ENCODE measurements at regions of chr17 and their contacts with region 1.

Region 1: DNA sequence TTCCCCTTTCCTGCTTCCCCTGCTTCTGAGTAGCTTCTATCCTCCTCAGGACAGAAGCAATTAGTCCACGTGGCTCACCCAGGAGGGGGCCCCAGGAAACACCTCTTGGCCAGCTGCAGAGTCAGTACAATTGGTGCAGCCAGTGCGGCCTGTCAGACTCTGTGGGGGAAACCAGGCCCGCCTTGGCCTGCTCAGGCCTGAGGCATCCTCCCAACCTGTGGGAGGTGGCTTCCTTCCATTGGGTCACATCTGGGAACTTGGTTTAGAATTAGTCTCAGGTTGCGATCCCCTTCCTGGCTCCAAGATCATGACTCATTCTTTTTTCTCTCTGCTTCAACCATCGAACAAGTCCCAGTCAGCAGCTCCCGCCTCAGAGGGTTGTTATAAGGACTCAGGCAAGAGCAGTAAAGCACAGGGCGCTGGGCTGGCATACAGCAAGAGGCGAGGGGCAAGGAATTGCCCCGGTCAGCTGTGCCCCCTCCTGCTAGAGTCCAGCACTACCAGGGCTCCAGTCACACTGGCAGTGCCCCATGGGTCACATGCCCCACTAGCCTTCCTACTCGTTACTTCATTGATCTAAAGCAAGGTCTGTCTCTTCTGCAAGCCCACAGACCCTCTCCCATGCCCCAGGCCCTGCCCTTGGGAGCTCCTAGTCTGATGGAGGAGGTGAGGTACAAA is 8.1 kb upstream of the EPX start:
- DNase-seq: no peak
- ATAC-seq: peak; percentile 8 to 39; a peak in 3 of 6 replicates
- H3K4me3 ChIP-seq: no peak overlapping the region
- H3K27ac ChIP-seq: no peak overlapping the region
- H3K4me1 ChIP-seq: peaks cover 1% of the 10 kb centered on the region; the same call in 2 of the 3 replicates
- CTCF ChIP-seq: no peak
- EP300 ChIP-seq: no peak
- POLR2A ChIP-seq: no peak
- RAD21 ChIP-seq: no peak

Region 2: DNA sequence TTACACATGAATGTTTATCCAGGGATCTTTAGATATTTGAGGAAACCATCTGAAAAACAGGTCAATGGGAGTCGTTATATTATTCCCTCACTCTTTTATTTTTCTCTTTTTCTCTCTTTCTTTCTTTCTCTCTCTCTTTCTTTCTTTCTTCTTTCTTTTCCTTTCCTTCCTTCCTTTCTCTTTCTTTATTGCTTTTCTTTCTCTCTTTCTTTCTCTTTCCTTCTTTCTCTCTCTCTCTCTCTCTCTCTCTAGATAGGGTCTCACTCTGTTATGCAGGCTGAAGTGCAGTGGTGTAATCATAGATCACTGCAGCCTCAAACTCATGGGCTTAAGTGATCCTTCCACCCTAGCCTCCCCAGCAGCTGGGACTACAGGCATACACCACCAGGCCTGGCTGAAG is 56.6 kb before region 1 on chr17:
- CTCF ChIA-PET with region 1: no interaction called
- POLR2A ChIA-PET with region 1: no interaction called
- DNase-seq: no peak
- ATAC-seq: no peak
- H3K4me3 ChIP-seq: no peak overlapping the region
- H3K27ac ChIP-seq: no peak overlapping the region
- H3K4me1 ChIP-seq: no peaks in the 10 kb centered on the region
- CTCF ChIP-seq: no peak
- EP300 ChIP-seq: no peak
- POLR2A ChIP-seq: no peak
- RAD21 ChIP-seq: no peak

Region 3: DNA sequence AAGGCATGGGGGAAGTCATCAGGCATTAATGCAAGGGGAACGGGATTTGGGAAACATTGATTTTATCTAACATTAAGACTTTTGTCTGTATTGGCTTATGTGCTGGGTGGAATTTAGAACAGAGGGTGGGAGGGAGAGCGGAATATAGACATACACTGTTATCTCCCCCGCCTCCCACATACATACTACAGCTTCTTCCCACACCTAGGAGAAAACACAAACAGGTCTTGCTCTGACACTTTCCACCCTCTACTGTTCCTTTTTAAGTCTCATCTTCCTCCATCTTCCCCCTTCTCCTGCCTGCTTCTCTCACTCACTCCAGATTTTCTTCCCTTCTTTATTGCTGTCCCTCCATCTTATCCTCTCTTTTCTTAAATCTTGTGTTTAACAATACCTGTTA is 35.8 kb before region 1 on chr17:
- CTCF ChIA-PET with region 1: no interaction called
- POLR2A ChIA-PET with region 1: no interaction called
- DNase-seq: no peak
- ATAC-seq: 0 out of 6 replicates have a peak, but pooled peaks of 1 of the 2 experiments have one; percentile 42
- H3K4me3 ChIP-seq: no peak overlapping the region
- H3K27ac ChIP-seq: no peak overlapping the region
- H3K4me1 ChIP-seq: no peaks in the 10 kb centered on the region
- CTCF ChIP-seq: no peak
- EP300 ChIP-seq: no peak
- POLR2A ChIP-seq: no peak
- RAD21 ChIP-seq: no peak

Region 4: DNA sequence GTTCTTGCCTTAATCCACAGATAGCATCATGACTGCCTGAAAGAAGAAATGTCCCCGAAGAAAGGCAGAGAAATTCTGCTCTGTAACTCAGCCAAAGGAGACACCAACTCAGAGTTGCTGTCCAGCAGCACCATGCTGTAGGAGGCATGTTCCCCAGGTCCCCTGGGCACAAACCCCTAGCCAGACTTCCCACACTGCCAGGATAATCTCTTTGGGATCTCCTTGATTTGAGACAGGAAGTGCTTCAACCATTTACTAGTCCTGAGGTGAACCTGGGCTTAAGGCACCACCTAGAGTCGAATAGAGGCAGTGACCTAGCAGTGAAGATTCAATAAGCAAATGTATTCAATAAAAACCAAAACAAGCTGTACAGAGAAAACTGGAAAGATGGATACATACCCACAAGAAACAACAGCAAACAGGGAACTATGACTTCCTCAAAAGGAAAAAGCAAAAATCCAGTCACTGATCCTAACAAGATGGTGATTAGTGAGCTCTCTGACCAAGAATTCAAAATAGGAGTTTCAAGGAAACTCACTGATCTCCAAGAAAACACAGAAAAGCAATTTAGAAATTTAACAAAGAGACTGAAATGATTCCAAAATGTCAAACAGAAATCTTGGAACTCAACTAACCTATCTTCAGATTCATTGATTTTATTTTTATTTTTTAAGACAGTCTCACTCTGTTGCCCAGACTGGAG is 11.9 kb before region 1 on chr17:
- CTCF ChIA-PET with region 1: interaction called, 24 read pairs
- POLR2A ChIA-PET with region 1: no interaction called
- DNase-seq: peak; percentile 68 to 75
- ATAC-seq: peak; percentile 75 to 91
- H3K4me3 ChIP-seq: no peak overlapping the region
- H3K27ac ChIP-seq: no peak overlapping the region
- H3K4me1 ChIP-seq: no peaks in the 10 kb centered on the region
- CTCF ChIP-seq: peak; percentile 61
- EP300 ChIP-seq: no peak
- POLR2A ChIP-seq: no peak
- RAD21 ChIP-seq: peak; percentile 53 to 85